Transverse colon (tissue), 4 donors: ENCODE measurements at regions of chr16 and their contacts with region 1.

Region 1: GRCh38 chr16:495127-495748 is 32.3 kb upstream of the CAPN15 start:
- DNase-seq: peak; percentile 36
- H3K4me3 ChIP-seq: no peak overlapping the region
- H3K27ac ChIP-seq: no peak overlapping the region
- H3K4me1 ChIP-seq: no peaks in the 10 kb centered on the region
- H3K27me3 ChIP-seq: no peaks in the 10 kb centered on the region
- CTCF ChIP-seq: peak in 3 of 5 experiments; percentile 26 to 37 (median 28)
- EP300 ChIP-seq: no peak
- POLR2A ChIP-seq: no peak

Region 2: DNA sequence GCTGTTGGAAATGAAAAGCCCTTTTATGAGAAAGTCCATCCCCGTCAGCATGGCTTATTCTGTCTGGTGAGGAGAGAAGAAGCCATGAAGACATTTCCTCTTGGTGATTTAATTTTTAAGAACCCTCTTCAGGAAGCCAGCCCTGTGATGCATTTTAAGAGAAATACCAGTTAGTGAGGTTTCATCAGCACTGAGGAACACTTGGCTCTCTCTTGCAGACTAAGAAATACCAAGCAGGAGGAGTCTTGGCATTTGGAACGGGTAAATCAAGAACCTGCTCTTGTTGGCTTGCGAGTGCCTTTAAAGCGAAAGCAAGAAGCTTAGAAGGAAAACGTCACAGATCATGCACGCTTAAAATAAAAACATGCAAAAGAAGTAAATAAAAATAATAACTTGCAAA is 52.3 kb before region 1 on chr16:
- in situ Hi-C with region 1: loop called in 1 of 4 experiments (anchors 10 kb)
- intact Hi-C with region 1: no loop called
- DNase-seq: no peak
- H3K4me3 ChIP-seq: no peak overlapping the region
- H3K27ac ChIP-seq: peak overlapping the region in 1 of 4 donors; percentile 29
- H3K4me1 ChIP-seq: no peaks in the 10 kb centered on the region
- H3K27me3 ChIP-seq: no peaks in the 10 kb centered on the region
- CTCF ChIP-seq: no peak
- EP300 ChIP-seq: no peak
- POLR2A ChIP-seq: no peak